Heart right ventricle (tissue), 16 donors: ENCODE measurements at regions of chr20 and their contacts with region 1.

Region 1: GRCh38 chr20:50744143-50744792 is 12.9 kb downstream of the PARD6B start:
- DNase-seq: peak; percentile 56 to 71
- ATAC-seq: peak; percentile 86 to 96 (median 91)
- H3K4me3 ChIP-seq: no peak overlapping the region
- H3K27ac ChIP-seq: peak overlapping the region; percentile 69 to 88 (median 82)
- H3K4me1 ChIP-seq: peaks cover 2 to 58% (median 30%) of the 10 kb centered on the region in 9 donors
- H3K27me3 ChIP-seq: no peaks in the 10 kb centered on the region
- CTCF ChIP-seq: peak in 7 of 9 donors; percentile 23 to 60 (median 37)

Region 2: GRCh38 chr20:50509935-50510705 is 234.1 kb before region 1 on chr20 and contains the start of gene PTPN1:
- intact Hi-C with region 1: loop called in 1 of 10 experiments (anchors 10 kb)
- DNase-seq: peak; percentile 98 to 99
- ATAC-seq: peak; percentile 98 to 99 (median 98)
- H3K4me3 ChIP-seq: peak within 1 kb of the TSS; percentile 82 to 99 (median 97)
- H3K27ac ChIP-seq: peak within 1 kb of the TSS; percentile 70 to 98 (median 92)
- H3K4me1 ChIP-seq: peaks cover 0 to 61% (median 46%) of the 10 kb centered on the region in 9 donors
- H3K27me3 ChIP-seq: no peaks in the 10 kb centered on the region
- CTCF ChIP-seq: peak in 2 of 9 donors; percentile 12 to 16
- total RNA-seq, gene PTPN1: 25.2 to 40.1 (median 29.4) TPM

Region 3: GRCh38 chr20:50588034-50588611 is 156.1 kb before region 1 on chr20:
- intact Hi-C with region 1: loop called in 4 of 10 experiments (anchors 5 to 10 kb)
- DNase-seq: peak; percentile 49 to 80
- ATAC-seq: peak in 7 of 8 donors; percentile 24 to 67 (median 44)
- H3K4me3 ChIP-seq: no peak overlapping the region
- H3K27ac ChIP-seq: no peak overlapping the region
- H3K4me1 ChIP-seq: peaks cover 0 to 21% (median 15%) of the 10 kb centered on the region in 9 donors
- H3K27me3 ChIP-seq: no peaks in the 10 kb centered on the region
- CTCF ChIP-seq: peak; percentile 61 to 94 (median 83)

Region 4: DNA sequence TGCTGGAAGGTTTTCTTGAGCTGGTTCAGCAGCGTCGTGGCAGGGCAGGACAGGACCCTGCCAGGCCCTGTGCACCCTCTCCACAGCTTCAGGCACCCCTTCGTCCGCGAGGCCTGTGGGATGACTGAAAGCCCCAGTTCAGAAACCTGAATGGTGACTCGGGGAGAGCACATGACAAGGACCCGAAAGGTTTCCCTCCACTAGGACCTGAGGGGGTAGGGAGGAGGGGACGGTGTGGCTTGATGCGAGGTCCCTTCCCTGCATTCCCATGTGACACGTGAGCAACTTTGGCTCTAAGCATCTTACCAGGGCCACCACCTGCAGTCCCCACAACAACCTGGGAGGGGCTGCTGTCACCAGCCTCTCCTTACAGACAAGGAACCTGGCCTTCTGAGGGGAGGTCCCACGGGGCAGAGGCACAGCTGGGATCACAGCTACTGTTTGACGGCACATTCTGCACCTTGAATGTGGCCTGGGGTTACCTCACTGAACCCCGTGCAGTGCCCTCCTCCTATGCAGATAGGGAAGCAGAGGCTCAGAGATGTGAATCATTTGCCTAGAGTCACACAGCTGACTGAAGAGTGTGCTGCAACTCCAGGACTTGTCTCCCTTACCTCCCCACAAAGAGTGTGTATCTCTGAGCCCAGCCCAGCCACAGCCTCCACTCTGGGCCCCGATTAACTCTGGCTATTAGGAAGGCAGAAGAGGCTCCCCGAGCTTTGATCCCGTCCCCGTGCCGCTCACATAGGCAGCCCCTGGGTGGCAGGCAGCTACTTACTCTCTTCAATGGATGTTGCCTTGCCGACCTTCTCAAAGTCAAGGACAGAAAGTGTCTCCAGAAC is 149.5 kb before region 1 on chr20:
- intact Hi-C with region 1: loop called in 3 of 10 experiments (anchors 10 kb)
- DNase-seq: no peak
- ATAC-seq: peak in 1 of 8 donors; percentile 2
- H3K4me3 ChIP-seq: no peak overlapping the region
- H3K27ac ChIP-seq: no peak overlapping the region
- H3K4me1 ChIP-seq: peaks cover 0 to 39% (median 23%) of the 10 kb centered on the region in 9 donors
- H3K27me3 ChIP-seq: peaks cover 0 to 24% (median 0%) of the 10 kb centered on the region in 7 donors
- CTCF ChIP-seq: no peak

Region 5: DNA sequence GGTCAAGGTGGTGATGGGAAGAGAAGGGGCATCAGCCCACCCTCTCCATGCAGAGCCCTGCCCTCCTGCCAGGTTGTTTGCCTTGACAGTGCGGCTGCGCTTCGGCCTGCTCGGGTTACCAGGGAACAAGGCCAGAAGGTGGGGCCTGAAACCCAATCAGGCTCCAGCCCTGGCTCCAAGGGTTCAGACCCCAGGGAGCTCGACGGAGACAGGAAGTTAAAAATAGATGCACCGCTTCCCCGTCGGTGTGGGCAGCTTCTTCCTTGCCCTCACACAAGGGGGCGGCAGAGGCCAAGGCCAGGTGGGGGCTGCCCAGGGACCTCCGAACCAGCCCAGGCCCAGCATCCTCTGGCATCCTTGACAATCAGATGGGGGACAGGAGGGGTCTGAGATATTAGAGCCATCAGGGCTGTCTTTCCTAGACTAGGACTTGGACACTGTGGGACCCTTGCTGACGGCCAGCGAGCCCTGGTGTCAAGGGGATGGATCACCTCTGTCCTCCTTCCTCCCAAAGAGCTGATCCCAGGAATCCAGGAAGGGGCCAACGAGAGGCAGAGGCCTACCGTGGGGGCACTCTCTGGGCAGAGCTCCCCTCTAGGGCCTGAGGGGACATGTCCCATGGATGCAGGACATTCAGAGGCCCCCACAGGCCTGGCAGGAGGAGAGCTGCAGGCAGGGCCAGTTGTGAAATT is 118.1 kb before region 1 on chr20:
- intact Hi-C with region 1: loop called in 7 of 10 experiments (anchors 2 to 10 kb)
- DNase-seq: peak; percentile 58 to 72
- ATAC-seq: peak; percentile 54 to 82 (median 70)
- H3K4me3 ChIP-seq: no peak overlapping the region
- H3K27ac ChIP-seq: peak overlapping the region in 5 of 10 donors; percentile 18 to 46 (median 34)
- H3K4me1 ChIP-seq: peaks cover 0 to 27% (median 12%) of the 10 kb centered on the region in 9 donors
- H3K27me3 ChIP-seq: no peaks in the 10 kb centered on the region
- CTCF ChIP-seq: peak; percentile 31 to 75 (median 63)

Region 6: DNA sequence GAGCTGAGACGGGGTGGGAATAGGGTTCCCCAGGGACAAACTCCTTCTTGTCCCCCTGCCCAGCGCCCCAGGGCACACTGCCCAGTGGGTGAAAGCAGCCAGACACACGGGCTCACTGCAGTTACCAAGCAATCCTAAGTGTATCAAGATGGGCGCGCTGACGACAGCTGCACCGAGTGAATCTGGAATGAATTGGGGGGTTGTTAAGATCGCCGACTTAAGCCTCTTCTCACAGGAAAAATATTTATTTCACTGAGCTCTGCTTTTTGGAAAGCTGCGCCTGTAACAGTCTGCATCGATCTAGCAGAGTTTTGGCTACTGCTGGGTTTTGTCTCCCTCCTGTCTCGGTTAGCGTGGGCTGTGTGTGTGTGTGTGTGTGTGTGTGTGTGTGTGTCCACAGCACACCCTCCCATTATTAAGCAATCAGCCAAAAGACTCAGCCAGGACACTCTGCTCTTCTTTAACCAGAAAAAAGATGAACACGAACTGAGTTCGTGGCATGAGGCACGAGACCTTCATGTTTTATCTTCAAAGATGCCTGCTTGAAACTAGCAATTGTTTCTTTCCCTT is 88.9 kb before region 1 on chr20:
- intact Hi-C with region 1: loop called in 5 of 10 experiments (anchors 1 to 10 kb)
- DNase-seq: peak; percentile 74 to 76
- ATAC-seq: peak; percentile 70 to 83 (median 78)
- H3K4me3 ChIP-seq: peak overlapping the region in 5 of 10 donors; percentile 1 to 36 (median 11)
- H3K27ac ChIP-seq: peak overlapping the region; percentile 9 to 87 (median 78)
- H3K4me1 ChIP-seq: peaks cover 5 to 61% (median 46%) of the 10 kb centered on the region in 9 donors
- H3K27me3 ChIP-seq: no peaks in the 10 kb centered on the region
- CTCF ChIP-seq: no peak

Region 7: GRCh38 chr20:50663095-50663850 is 81.0 kb before region 1 on chr20:
- intact Hi-C with region 1: loop called in 4 of 10 experiments (anchors 1 to 10 kb)
- DNase-seq: peak in 1 of 2 donors; percentile 30
- ATAC-seq: peak in 7 of 8 donors; percentile 25 to 55 (median 35)
- H3K4me3 ChIP-seq: no peak overlapping the region
- H3K27ac ChIP-seq: peak overlapping the region in 9 of 10 donors; percentile 26 to 81 (median 71)
- H3K4me1 ChIP-seq: peaks cover 0 to 58% (median 44%) of the 10 kb centered on the region in 9 donors
- H3K27me3 ChIP-seq: no peaks in the 10 kb centered on the region
- CTCF ChIP-seq: peak in 5 of 9 donors; percentile 17 to 45 (median 41)